ENCODE measurements at regions of chr11 and their contacts with region 1.

Region 1: DNA sequence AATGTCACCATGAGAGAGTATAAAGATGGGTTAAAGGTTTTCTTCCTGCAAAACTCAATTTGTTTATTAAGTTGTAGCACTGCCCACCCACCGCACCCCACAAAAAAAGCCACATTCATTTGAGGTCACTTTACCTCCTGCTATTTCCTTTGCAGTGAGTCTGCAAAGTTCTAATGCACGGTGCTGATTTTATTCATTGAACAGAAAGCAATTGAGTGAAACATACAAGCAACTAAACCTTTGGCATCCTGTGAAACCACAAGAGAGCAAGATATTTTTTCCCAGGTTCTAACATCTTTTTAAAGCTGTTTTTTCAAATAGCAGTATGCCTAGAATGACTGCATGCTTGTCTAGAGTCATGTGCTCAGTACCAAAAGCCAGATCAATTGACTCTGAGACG is 39.0 kb downstream of the RRAS2 start:
- DNase-seq: no peak
- ATAC-seq: no peak
- H3K4me3 ChIP-seq: no peak overlapping the region
- H3K27ac ChIP-seq: no peak overlapping the region; a peak in 1 of 6 replicates
- H3K4me1 ChIP-seq: peaks cover 29% of the 10 kb centered on the region
- CTCF ChIP-seq: no peak
- EP300 ChIP-seq: no peak
- POLR2A ChIP-seq: no peak
- RAD21 ChIP-seq: no peak

Region 2: DNA sequence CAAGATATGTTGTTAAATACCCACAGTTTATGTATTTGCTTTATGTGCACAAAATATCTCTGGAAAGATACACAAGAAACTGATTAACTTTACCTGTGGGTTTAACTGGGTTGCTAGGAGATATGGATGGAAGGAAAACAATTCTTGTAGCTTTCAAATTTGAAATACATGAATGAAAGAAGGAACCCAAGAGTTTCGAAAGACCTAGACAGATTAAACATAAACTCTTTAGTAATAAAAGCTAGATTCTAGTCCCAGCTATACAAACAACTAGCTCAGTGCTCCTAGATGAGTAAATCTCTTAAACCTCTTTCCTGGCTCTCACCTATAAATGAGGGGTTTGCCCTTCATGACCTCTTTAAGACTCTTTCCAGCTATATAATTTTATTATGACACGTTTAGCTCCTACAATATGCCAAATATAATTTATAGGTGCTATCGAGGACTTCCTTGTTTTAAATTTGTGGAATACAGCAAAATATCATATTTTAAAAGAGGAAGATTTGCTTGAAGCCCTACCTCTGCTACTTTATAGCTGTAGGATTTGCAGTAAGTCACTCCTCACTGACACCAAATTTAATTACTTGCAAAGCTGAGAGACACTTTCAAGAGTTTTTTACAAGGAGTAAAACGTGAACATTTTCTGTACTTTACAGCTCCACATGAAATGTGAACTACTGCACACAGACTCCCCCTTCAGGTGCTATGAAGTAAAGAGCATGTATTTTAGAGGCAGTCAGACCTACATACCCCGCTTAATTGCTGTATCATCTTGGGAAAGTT is 11.7 kb before region 1 on chr11:
- CTCF ChIA-PET with region 1: interaction called, 12 read pairs
- POLR2A ChIA-PET with region 1: no interaction called
- DNase-seq: peak; percentile 59 to 66
- ATAC-seq: peak; percentile 84 to 90; a peak in 5 of 6 replicates
- H3K4me3 ChIP-seq: no peak overlapping the region
- H3K27ac ChIP-seq: peak overlapping the region; percentile 55 to 67; a peak in 5 of 6 replicates
- H3K4me1 ChIP-seq: peaks cover 39% of the 10 kb centered on the region
- CTCF ChIP-seq: peak; percentile 62
- EP300 ChIP-seq: no peak
- POLR2A ChIP-seq: no peak
- RAD21 ChIP-seq: peak; percentile 38 to 39; a peak in 3 of 5 replicates